Ascending aorta (tissue), 2 donors: ENCODE measurements at regions of chr12 and their contacts with region 1.

Region 1: GRCh38 chr12:120649442-120650232 is 9.2 kb downstream of the CABP1 start:
- DNase-seq: no peak
- H3K4me3 ChIP-seq: peak overlapping the region; percentile 48 to 65
- H3K27ac ChIP-seq: peak overlapping the region; percentile 52 to 64
- H3K4me1 ChIP-seq: peaks cover 12 to 33% of the 10 kb centered on the region in 2 donors
- H3K27me3 ChIP-seq: no peaks in the 10 kb centered on the region
- CTCF ChIP-seq: no peak

Region 2: GRCh38 chr12:120669055-120669840 is 19.6 kb after region 1 on chr12:
- intact Hi-C with region 1: loop called (anchors 2 kb)
- DNase-seq: peak in 1 of 2 donors; percentile 73
- H3K4me3 ChIP-seq: peak overlapping the region in 1 of 2 donors; percentile 43
- H3K27ac ChIP-seq: peak overlapping the region; percentile 58 to 73
- H3K4me1 ChIP-seq: peaks cover 0 to 5% of the 10 kb centered on the region in 2 donors
- H3K27me3 ChIP-seq: no peaks in the 10 kb centered on the region
- CTCF ChIP-seq: no peak

Region 3: DNA sequence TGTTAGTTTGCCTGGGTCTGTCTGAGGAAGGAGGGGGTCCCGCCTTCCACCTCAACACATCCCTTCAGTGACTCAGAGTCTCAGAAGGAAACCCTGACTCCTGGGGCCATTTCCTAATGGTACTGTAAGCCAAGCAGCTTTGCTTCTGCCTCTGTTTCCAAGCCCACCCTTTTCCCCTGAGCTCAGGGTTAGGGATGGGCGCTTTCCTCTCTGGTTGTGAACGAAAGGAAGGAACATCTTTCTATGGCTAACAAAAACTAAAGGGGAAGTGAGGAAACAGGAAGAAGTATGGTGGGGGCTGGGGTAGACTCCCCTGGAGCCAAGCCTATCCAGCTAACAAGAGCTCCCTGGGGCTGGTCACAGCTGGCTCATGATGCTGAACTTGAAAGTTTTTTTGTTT is 49.0 kb after region 1 on chr12:
- intact Hi-C with region 1: no loop called
- DNase-seq: no peak
- H3K4me3 ChIP-seq: no peak overlapping the region
- H3K27ac ChIP-seq: no peak overlapping the region
- H3K4me1 ChIP-seq: no peaks in the 10 kb centered on the region
- H3K27me3 ChIP-seq: no peaks in the 10 kb centered on the region
- CTCF ChIP-seq: no peak

Region 4: DNA sequence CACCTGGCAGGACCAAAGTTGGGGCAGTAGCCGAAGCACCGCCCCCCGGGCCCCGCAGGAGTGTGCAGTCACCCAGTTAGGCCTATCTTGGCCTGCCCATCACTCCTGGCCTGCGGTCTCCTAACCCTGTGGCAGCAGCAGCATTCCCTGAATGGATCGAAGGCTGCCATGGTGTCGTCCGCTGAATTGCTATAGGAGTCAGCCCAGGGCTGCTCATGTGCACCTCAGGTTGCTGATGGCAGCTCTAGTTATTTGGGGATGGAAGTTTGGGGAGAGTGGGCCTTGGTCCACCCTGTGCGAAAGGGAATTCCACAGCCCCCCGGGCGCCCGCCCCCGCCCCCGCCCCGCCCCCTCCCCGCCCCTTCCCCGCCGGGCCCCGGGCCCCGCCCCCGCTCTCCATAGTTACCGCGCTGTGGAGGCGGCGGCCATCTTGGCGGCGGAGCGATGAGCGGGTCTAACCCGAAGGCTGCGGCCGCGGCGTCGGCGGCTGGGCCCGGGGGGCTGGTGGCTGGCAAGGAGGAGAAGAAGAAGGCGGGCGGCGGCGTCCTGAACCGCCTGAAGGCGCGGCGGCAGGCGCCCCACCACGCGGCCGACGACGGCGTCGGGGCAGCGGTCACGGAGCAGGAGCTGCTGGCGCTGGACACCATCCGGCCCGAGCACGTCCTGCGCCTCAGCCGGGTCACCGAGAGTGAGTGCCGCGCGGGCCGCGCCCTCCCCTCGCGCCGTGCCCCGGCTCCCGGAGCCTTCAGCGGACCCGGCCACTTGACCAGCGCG is 60.6 kb after region 1 on chr12 and contains the start of gene UNC119B:
- intact Hi-C with region 1: loop called (anchors 1 kb)
- DNase-seq: peak in 1 of 2 donors; percentile 74
- H3K4me3 ChIP-seq: peak within 1 kb of the TSS; percentile 72 to 82
- H3K27ac ChIP-seq: peak within 1 kb of the TSS; percentile 72 to 86
- H3K4me1 ChIP-seq: peaks cover 0 to 9% of the 10 kb centered on the region in 2 donors
- H3K27me3 ChIP-seq: no peaks in the 10 kb centered on the region
- CTCF ChIP-seq: no peak
- total RNA-seq, gene UNC119B: 26.8 TPM

Region 5: DNA sequence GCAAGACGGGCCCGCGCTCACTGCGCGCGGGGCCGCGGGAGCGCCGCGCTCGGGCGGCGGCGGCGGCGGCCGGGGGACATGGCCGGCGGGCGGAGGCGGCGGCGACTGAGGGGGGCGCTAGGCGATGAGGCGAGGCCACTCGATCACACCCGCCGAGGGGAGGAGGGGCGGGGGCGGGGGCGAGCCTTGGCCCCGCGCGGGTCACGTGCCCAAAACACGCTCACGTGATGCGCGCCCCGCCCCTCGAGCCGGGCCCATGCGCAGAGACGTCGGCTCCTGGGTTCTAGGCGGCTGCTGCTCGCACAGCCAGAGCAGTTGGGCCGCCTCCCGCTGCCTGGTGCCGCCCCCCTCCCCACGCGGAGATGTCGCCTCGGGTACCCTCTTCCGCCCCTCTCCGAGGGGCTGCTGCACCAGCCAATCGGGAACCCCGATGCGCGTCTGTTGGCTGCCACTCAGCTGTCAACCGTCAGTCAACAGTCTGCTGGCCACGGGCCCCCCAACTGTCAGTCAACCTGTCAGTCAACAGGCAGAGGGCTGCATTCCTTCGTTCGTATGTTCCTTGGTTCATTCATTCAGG is 254.6 kb after region 1 on chr12 and contains the start of gene SPPL3:
- intact Hi-C with region 1: loop called (anchors 2 kb)
- DNase-seq: peak; percentile 62 to 94
- H3K4me3 ChIP-seq: peak within 1 kb of the TSS; percentile 91 to 97
- H3K27ac ChIP-seq: peak within 1 kb of the TSS; percentile 83 to 93
- H3K4me1 ChIP-seq: peaks cover 12 to 30% of the 10 kb centered on the region in 2 donors
- H3K27me3 ChIP-seq: no peaks in the 10 kb centered on the region
- CTCF ChIP-seq: no peak
- total RNA-seq, gene SPPL3: 20.4 TPM

Region 6: DNA sequence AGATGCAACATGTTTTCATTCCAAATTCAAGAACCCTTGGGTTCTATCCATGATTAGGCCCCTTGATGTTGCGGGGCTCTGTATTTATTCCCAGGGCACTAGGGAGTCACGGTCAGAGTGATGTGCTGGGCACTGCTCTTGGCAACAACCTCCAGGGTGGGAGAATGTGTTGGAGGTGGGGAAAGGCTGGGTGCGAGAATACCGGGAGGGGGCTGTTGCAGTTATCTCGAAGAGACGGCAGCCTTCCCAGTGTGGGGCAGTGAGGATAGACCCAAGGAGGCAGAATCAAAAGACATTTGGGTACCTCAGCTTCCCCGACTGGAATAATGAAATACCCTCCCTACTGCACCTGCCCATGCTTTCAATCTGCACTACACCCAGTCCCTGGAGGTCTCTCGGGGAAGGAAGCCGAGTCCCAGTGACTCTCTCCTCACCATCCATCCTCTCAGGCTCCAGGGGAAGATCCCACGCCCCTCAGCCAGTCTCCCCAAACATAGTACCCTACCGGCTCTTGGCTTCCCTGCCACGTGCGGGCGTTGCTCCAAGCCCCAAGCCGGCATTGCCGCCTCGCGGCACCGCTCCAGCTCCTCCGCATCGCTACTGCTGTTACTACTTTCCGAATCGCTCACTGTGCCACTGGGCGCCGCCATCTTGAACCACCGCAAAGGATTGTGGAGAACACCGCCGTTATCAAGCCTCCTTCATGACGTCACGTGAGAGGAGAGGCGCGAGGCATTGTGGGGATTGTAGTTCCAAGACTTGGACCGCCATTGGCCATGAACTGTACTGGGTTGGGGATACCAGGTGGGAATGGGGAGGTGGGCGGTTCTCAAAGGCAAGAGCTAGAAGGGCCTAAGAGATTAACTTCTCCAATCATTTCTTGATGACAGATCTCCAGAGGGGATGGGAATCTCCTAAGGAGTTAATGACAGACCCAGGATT is 366.5 kb after region 1 on chr12 and contains the start of gene C12orf43:
- intact Hi-C with region 1: loop called (anchors 5 kb)
- DNase-seq: peak; percentile 69 to 95
- H3K4me3 ChIP-seq: peak within 1 kb of the TSS; percentile 72 to 81
- H3K27ac ChIP-seq: peak within 1 kb of the TSS; percentile 58 to 70
- H3K4me1 ChIP-seq: no peaks in the 10 kb centered on the region
- H3K27me3 ChIP-seq: no peaks in the 10 kb centered on the region
- CTCF ChIP-seq: no peak
- total RNA-seq, gene C12orf43: 47.1 TPM